Sigmoid colon (tissue), 7 donors: ENCODE measurements at regions of chr7 and their contacts with region 1.

Region 1: GRCh38 chr7:55951637-55952351 is at the start of gene MRPS17:
- DNase-seq: peak; percentile 94
- H3K4me3 ChIP-seq: peak within 1 kb of the TSS; percentile 55 to 86 (median 82)
- H3K27ac ChIP-seq: peak within 1 kb of the TSS; percentile 77 to 87 (median 82)
- H3K4me1 ChIP-seq: peaks cover 0 to 14% (median 10%) of the 10 kb centered on the region in 4 donors
- H3K27me3 ChIP-seq: no peaks in the 10 kb centered on the region
- CTCF ChIP-seq: no peak
- EP300 ChIP-seq: peak in 1 of 4 donors; percentile 21
- POLR2A ChIP-seq: peak; percentile 61 to 71
- total RNA-seq, gene MRPS17: 9.7 to 15.6 (median 12.5) TPM

Region 2: DNA sequence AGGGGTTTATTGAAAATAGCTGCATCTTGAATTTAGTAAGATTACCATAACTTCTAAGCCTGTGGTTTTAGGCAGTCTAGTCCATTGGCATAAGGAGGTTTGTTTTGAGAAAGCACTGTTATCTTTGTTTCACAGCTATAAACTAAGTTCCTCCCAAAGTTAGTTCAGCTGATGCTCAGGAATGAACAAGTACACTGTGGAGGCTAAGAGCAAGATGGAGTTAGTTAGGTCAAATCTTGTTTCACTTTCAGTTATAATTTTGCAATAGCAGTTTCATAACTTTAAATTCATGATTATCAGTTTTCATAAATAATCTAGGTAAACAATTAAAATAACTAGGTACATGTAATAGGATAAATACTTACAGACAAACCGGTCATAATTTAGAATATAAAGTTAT is 1208.2 kb before region 1 on chr7:
- intact Hi-C with region 1: no loop called
- DNase-seq: no peak
- H3K4me3 ChIP-seq: no peak overlapping the region
- H3K27ac ChIP-seq: no peak overlapping the region
- H3K4me1 ChIP-seq: no peaks in the 10 kb centered on the region
- H3K27me3 ChIP-seq: no peaks in the 10 kb centered on the region
- CTCF ChIP-seq: no peak
- EP300 ChIP-seq: no peak
- POLR2A ChIP-seq: no peak

Region 3: GRCh38 chr7:55912748-55913158 is 39.0 kb before region 1 on chr7:
- intact Hi-C with region 1: no loop called
- DNase-seq: no peak
- H3K4me3 ChIP-seq: no peak overlapping the region
- H3K27ac ChIP-seq: no peak overlapping the region
- H3K4me1 ChIP-seq: no peaks in the 10 kb centered on the region
- H3K27me3 ChIP-seq: no peaks in the 10 kb centered on the region
- CTCF ChIP-seq: no peak
- EP300 ChIP-seq: no peak
- POLR2A ChIP-seq: no peak

Region 4: GRCh38 chr7:56063882-56064625 is 112.3 kb after region 1 on chr7 and contains the start of gene SUMF2:
- intact Hi-C with region 1: loop called (anchors 5 kb)
- DNase-seq: peak; percentile 94
- H3K4me3 ChIP-seq: peak within 1 kb of the TSS; percentile 70 to 89 (median 80)
- H3K27ac ChIP-seq: peak within 1 kb of the TSS; percentile 91 to 96 (median 95)
- H3K4me1 ChIP-seq: peaks cover 0 to 13% (median 12%) of the 10 kb centered on the region in 4 donors
- H3K27me3 ChIP-seq: no peaks in the 10 kb centered on the region
- CTCF ChIP-seq: no peak
- EP300 ChIP-seq: no peak
- POLR2A ChIP-seq: peak; percentile 87 to 92
- total RNA-seq, gene SUMF2: 87.5 to 107 (median 96.3) TPM